ENCODE measurements at regions of chr22 and their contacts with region 1.

Region 1: GRCh38 chr22:39319270-39320022 is at the start of gene RPL3:
- DNase-seq: peak; percentile 98
- H3K4me3 Mint-ChIP-seq: peak within 1 kb of the TSS; percentile 99
- H3K27ac Mint-ChIP-seq: peak within 1 kb of the TSS; percentile 100
- H3K4me1 Mint-ChIP-seq: peaks cover 17% of the 10 kb centered on the region
- H3K27me3 Mint-ChIP-seq: no peaks in the 10 kb centered on the region
- CTCF ChIP-seq: no peak
- total RNA-seq, gene RPL3: 3,475 and 3,632 TPM in 2 replicates

Region 2: DNA sequence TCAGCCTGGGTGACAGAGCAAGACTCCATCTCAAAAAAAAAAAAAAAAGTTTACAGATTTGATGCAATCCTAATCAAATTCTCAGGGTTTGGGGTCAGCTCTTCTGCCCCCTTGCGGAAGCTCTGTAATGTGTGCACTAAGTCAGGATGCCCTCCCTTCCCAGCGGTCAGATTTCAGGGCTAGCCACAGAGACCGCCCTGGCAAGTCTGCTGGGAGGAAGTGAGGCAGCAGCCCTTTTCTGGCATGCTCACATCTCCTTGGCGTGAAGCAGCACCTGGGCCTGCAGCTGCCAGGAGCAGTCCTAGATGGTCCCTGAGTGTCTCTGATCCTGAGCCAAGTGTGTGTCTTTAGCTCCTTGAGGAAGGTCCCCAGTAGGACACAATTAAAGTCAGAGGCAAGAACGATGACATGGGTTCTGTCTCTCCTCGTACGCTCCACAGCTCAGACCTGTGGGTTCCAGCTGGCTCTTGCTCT is 316.2 kb before region 1 on chr22:
- CTCF ChIA-PET with region 1: no interaction called
- POLR2A ChIA-PET with region 1: interaction called, 3 read pairs
- intact Hi-C with region 1: loop called (anchors 5 kb)
- DNase-seq: peak; percentile 87
- H3K4me3 Mint-ChIP-seq: no peak overlapping the region
- H3K27ac Mint-ChIP-seq: no peak overlapping the region
- H3K4me1 Mint-ChIP-seq: no peaks in the 10 kb centered on the region
- H3K27me3 Mint-ChIP-seq: peaks cover 20% of the 10 kb centered on the region
- CTCF ChIP-seq: peak; percentile 66

Region 3: GRCh38 chr22:39207141-39208012 is 112.1 kb before region 1 on chr22:
- CTCF ChIA-PET with region 1: no interaction called
- POLR2A ChIA-PET with region 1: interaction called, 14 read pairs
- intact Hi-C with region 1: no loop called
- DNase-seq: peak; percentile 45
- H3K4me3 Mint-ChIP-seq: peak overlapping the region; percentile 26
- H3K27ac Mint-ChIP-seq: peak overlapping the region; percentile 72
- H3K4me1 Mint-ChIP-seq: peaks cover 32% of the 10 kb centered on the region
- H3K27me3 Mint-ChIP-seq: no peaks in the 10 kb centered on the region
- CTCF ChIP-seq: no peak

Region 4: DNA sequence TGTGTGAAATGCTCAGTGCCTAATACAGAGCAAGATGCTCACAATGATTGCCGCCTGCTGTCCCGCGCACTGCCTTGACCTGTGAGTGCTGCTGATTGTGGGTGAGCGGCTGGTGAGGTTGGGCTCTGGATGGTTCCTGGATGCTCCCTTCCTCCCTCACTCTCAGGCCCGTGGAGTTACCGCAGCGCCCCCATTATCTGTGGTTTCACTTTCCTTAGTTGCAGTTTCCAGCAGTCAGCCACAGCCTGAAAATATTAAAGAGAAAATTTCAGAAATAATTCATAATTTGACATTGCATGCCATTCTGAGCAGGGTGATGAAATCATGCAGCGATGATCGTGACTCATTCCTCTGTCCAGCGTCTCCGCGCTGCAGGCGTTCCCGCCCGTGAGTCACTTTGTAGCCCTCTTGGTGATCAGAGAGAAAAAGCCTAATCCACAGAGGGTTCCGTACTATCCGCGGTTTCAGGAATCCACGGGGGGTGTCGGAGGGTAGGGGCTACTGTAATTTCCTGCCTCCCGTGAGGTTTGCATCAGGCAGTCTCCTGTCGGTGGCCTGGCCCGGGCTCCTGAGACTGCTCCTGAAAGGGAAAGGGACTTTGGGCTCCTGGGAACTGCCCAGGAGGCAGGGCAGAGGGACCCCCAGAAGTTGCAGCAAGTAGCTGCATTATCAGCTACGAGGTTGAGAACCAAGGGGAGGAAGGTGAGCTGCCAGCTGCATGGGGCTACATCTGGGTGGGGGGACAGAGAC is 10.7 kb before region 1 on chr22:
- CTCF ChIA-PET with region 1: interaction called, 5 read pairs
- POLR2A ChIA-PET with region 1: interaction called, 32 read pairs
- intact Hi-C with region 1: no loop called
- DNase-seq: peak; percentile 93
- H3K4me3 Mint-ChIP-seq: peak overlapping the region; percentile 62
- H3K27ac Mint-ChIP-seq: peak overlapping the region; percentile 59
- H3K4me1 Mint-ChIP-seq: peaks cover 30% of the 10 kb centered on the region
- H3K27me3 Mint-ChIP-seq: no peaks in the 10 kb centered on the region
- CTCF ChIP-seq: no peak

Region 5: GRCh38 chr22:39405346-39406085 is 86.1 kb after region 1 on chr22:
- CTCF ChIA-PET with region 1: no interaction called
- POLR2A ChIA-PET with region 1: interaction called, 34 read pairs
- intact Hi-C with region 1: no loop called
- DNase-seq: no peak
- H3K4me3 Mint-ChIP-seq: no peak overlapping the region
- H3K27ac Mint-ChIP-seq: no peak overlapping the region
- H3K4me1 Mint-ChIP-seq: peaks cover 4% of the 10 kb centered on the region
- H3K27me3 Mint-ChIP-seq: no peaks in the 10 kb centered on the region
- CTCF ChIP-seq: no peak

Region 6: GRCh38 chr22:39428578-39429071 is 109.2 kb after region 1 on chr22:
- CTCF ChIA-PET with region 1: no interaction called
- POLR2A ChIA-PET with region 1: no interaction called
- intact Hi-C with region 1: no loop called
- DNase-seq: no peak
- H3K4me3 Mint-ChIP-seq: no peak overlapping the region
- H3K27ac Mint-ChIP-seq: no peak overlapping the region
- H3K4me1 Mint-ChIP-seq: no peaks in the 10 kb centered on the region
- H3K27me3 Mint-ChIP-seq: no peaks in the 10 kb centered on the region
- CTCF ChIP-seq: no peak

Region 7: GRCh38 chr22:39532215-39533071 is 213.0 kb after region 1 on chr22 and contains the start of gene RPS19BP1:
- CTCF ChIA-PET with region 1: interaction called, 11 read pairs
- POLR2A ChIA-PET with region 1: interaction called, 49 read pairs
- intact Hi-C with region 1: no loop called
- DNase-seq: peak; percentile 100
- H3K4me3 Mint-ChIP-seq: peak within 1 kb of the TSS; percentile 97
- H3K27ac Mint-ChIP-seq: peak within 1 kb of the TSS; percentile 87
- H3K4me1 Mint-ChIP-seq: peaks cover 44% of the 10 kb centered on the region
- H3K27me3 Mint-ChIP-seq: no peaks in the 10 kb centered on the region
- CTCF ChIP-seq: no peak
- total RNA-seq, gene RPS19BP1: 104 and 106 TPM in 2 replicates

Measured in MCF 10A (cell line).